B cell (primary cell): ENCODE measurements at regions of chr15 and their contacts with region 1.

Region 1: GRCh38 chr15:90686435-90687218 is 30.5 kb upstream of the BLM start:
- DNase-seq: peak; percentile 25
- ATAC-seq: peak; percentile 56
- H3K4me3 ChIP-seq: no peak overlapping the region
- H3K4me3 Mint-ChIP-seq: peak overlapping the region; percentile 1
- H3K27ac ChIP-seq: no peak overlapping the region
- H3K27ac Mint-ChIP-seq: peak overlapping the region; percentile 15
- H3K4me1 ChIP-seq: peaks cover 18 to 23% of the 10 kb centered on the region in 2 donors
- H3K4me1 Mint-ChIP-seq: peaks cover 19% of the 10 kb centered on the region
- H3K27me3 ChIP-seq: peaks cover 0 to 6% (median 0%) of the 10 kb centered on the region in 4 experiments
- H3K27me3 Mint-ChIP-seq: peaks cover 4% of the 10 kb centered on the region
- CTCF ChIP-seq: no peak

Region 2: GRCh38 chr15:90665288-90666134 is 21.1 kb before region 1 on chr15:
- CTCF ChIA-PET with region 1: no interaction called
- POLR2A ChIA-PET with region 1: no interaction called
- intact Hi-C with region 1: loop called (anchors 2 kb)
- DNase-seq: peak; percentile 83
- ATAC-seq: peak; percentile 73
- H3K4me3 ChIP-seq: peak overlapping the region in 4 of 5 experiments; percentile 50 to 82 (median 62)
- H3K4me3 Mint-ChIP-seq: peak overlapping the region; percentile 89
- H3K27ac ChIP-seq: peak overlapping the region; percentile 20 to 57
- H3K27ac Mint-ChIP-seq: peak overlapping the region; percentile 78
- H3K4me1 ChIP-seq: peaks cover 54 to 65% of the 10 kb centered on the region in 2 donors
- H3K4me1 Mint-ChIP-seq: peaks cover 56% of the 10 kb centered on the region
- H3K27me3 ChIP-seq: peaks cover 0 to 17% (median 11%) of the 10 kb centered on the region in 4 experiments
- H3K27me3 Mint-ChIP-seq: peaks cover 13% of the 10 kb centered on the region
- CTCF ChIP-seq: no peak